ENCODE measurements at regions of chr20 and their contacts with region 1.

Region 1: DNA sequence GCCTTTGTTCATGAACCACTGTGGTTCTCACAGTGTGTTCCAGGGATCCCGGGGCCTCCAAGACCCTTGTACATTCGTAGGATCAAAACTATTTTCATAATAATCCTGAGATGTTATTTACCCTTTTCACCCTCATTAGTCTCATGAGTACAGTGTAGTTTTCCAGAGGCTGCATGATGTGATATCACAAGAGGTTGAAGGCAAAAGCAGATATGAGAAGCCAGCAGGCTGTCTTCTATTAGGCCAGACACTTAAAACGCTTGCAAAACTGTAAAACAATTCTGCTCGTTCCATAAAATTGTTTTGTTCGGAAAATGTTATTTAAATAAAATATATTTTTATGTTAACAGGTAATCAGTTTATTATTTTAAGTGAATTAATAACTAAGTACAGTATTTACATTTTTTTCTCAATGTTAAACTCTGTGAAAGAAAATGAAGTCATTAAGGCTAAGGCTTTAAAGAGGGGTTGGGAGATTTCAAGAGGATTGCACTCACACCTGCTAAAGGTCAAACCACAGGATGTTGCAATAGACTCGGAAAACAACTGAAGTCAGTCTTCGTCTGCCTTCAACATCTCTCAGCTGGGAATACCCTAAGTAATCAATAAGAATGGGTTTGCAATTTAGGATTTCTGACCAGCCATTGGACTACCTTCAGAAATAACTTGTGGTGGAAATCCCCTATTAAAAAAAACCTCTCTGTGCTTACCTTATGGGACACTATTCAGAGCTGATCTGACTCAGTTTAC is 474.2 kb downstream of the KIF16B start:
- DNase-seq: no peak
- H3K4me3 ChIP-seq: no peak overlapping the region
- H3K4me3 Mint-ChIP-seq: no peak overlapping the region
- H3K27ac ChIP-seq: no peak overlapping the region
- H3K27ac Mint-ChIP-seq: no peak overlapping the region
- H3K4me1 ChIP-seq: no peaks in the 10 kb centered on the region
- H3K4me1 Mint-ChIP-seq: no peaks in the 10 kb centered on the region
- H3K27me3 ChIP-seq: no peaks in the 10 kb centered on the region
- H3K27me3 Mint-ChIP-seq: peaks cover 0 to 1% (median 0%) of the 10 kb centered on the region in 3 donors
- CTCF ChIP-seq: no peak

Region 2: GRCh38 chr20:15654208-15654645 is 444.8 kb before region 1 on chr20:
- intact Hi-C with region 1: no loop called
- DNase-seq: peak; percentile 5 to 13 (median 11)
- H3K4me3 ChIP-seq: no peak overlapping the region
- H3K4me3 Mint-ChIP-seq: no peak overlapping the region
- H3K27ac ChIP-seq: no peak overlapping the region
- H3K27ac Mint-ChIP-seq: no peak overlapping the region
- H3K4me1 ChIP-seq: no peaks in the 10 kb centered on the region
- H3K4me1 Mint-ChIP-seq: no peaks in the 10 kb centered on the region
- H3K27me3 ChIP-seq: no peaks in the 10 kb centered on the region
- H3K27me3 Mint-ChIP-seq: peaks cover 0 to 4% (median 0%) of the 10 kb centered on the region in 3 donors
- CTCF ChIP-seq: peak; percentile 57

Region 3: GRCh38 chr20:16036331-16036730 is 62.7 kb before region 1 on chr20:
- intact Hi-C with region 1: loop called in 1 of 2 experiments (anchors 10 kb)
- DNase-seq: no peak
- H3K4me3 ChIP-seq: no peak overlapping the region
- H3K4me3 Mint-ChIP-seq: no peak overlapping the region
- H3K27ac ChIP-seq: no peak overlapping the region
- H3K27ac Mint-ChIP-seq: no peak overlapping the region
- H3K4me1 ChIP-seq: peaks cover 8 to 9% of the 10 kb centered on the region in 2 donors
- H3K4me1 Mint-ChIP-seq: peaks cover 14% of the 10 kb centered on the region
- H3K27me3 ChIP-seq: no peaks in the 10 kb centered on the region
- H3K27me3 Mint-ChIP-seq: peaks cover 0 to 2% (median 1%) of the 10 kb centered on the region in 3 donors
- CTCF ChIP-seq: no peak

Region 4: DNA sequence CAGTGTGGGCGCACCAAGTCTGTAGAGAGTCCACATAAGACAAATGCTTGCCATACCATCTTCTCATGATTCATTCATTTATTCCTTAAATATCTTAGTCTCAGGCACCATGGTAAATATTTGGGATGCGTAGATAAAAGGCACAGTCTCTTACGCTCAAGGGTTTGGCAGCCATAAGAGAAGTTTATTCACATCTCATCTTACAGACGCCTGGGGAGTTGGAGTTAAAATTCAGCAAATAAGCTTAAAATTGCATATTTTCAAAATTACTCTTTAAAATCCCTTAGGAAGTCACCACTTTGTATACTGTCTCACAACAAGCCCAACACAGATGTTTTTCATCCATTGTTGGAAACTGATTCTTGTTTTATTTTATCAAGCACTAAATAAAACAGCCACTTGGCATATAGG is 110.9 kb after region 1 on chr20:
- intact Hi-C with region 1: no loop called
- DNase-seq: no peak
- H3K4me3 ChIP-seq: no peak overlapping the region
- H3K4me3 Mint-ChIP-seq: no peak overlapping the region
- H3K27ac ChIP-seq: no peak overlapping the region
- H3K27ac Mint-ChIP-seq: no peak overlapping the region
- H3K4me1 ChIP-seq: no peaks in the 10 kb centered on the region
- H3K4me1 Mint-ChIP-seq: no peaks in the 10 kb centered on the region
- H3K27me3 ChIP-seq: no peaks in the 10 kb centered on the region
- H3K27me3 Mint-ChIP-seq: peaks cover 0 to 3% (median 0%) of the 10 kb centered on the region in 3 donors
- CTCF ChIP-seq: no peak